ENCODE measurements at regions of chr20 and their contacts with region 1.

Region 1: DNA sequence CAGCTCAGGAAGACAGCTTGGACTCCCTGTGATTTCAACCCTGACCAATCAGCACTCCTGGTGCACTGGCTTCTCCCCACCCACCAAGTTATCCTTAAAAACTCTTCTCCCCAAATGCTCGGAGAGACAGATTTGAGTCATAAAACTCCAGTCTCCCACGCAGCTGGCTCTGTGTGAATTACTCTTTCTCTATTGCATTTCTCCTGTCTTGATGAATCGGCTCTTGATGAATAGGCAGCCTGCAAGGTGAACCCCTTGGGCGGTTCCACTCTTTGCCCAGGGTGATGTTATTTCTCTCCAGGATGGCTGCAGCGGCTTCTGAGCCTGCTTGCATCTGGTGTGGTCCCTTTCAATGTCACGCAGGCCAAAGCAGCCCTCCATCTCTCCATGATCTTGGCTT is 12.4 kb downstream of the SLC52A3 start:
- DNase-seq: no peak
- H3K4me3 ChIP-seq: no peak overlapping the region
- H3K27ac ChIP-seq: no peak overlapping the region
- H3K4me1 ChIP-seq: no peaks in the 10 kb centered on the region
- H3K27me3 ChIP-seq: peaks cover 0 to 7% of the 10 kb centered on the region in 2 donors
- CTCF ChIP-seq: no peak
- POLR2A ChIP-seq: no peak

Region 2: GRCh38 chr20:588932-589672 is 166.8 kb before region 1 on chr20:
- intact Hi-C with region 1: no loop called
- DNase-seq: no peak
- H3K4me3 ChIP-seq: no peak overlapping the region
- H3K27ac ChIP-seq: no peak overlapping the region
- H3K4me1 ChIP-seq: no peaks in the 10 kb centered on the region
- H3K27me3 ChIP-seq: peaks cover 0 to 4% of the 10 kb centered on the region in 2 donors
- CTCF ChIP-seq: no peak
- POLR2A ChIP-seq: no peak

Region 3: DNA sequence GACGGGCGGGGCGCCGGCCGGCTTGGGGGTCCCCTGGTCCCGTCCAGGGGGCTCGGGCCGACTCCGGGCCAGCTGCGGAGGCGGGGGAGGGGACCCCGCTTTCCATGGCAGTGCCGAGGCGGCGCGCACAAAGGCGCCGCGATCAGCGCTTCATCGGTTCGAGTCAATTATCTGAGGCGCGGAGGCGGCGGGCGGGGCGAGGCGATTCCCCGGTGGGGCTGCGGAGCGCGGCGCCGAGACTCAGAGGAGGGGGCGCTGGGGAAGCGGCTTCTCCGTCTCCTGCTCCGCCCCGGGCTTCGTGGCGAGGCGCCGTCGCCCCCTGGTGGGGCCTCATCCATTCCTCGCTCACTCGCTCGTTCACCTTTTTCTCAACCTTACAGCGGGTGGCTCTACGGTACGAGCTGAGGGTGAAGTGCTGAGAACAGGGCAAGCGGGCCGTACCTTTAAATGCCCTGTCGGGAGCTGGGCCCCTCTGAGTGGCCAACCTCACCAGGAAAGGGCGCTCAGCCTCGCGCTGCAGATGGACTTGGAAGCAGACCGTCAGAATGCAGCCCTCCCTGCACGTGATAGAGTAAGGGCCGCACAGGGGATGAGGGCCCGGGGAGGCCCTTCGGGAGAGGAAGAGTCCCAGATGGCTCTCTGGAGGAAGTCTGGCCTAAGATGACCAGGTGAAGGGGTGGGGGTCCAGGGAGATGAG is 27.5 kb before region 1 on chr20:
- intact Hi-C with region 1: no loop called
- DNase-seq: no peak
- H3K4me3 ChIP-seq: peak overlapping the region; percentile 11 to 65 (median 43)
- H3K27ac ChIP-seq: no peak overlapping the region
- H3K4me1 ChIP-seq: no peaks in the 10 kb centered on the region
- H3K27me3 ChIP-seq: peaks cover 0 to 28% of the 10 kb centered on the region in 2 donors
- CTCF ChIP-seq: peak in 1 of 3 donors; percentile 35
- POLR2A ChIP-seq: no peak

Region 4: DNA sequence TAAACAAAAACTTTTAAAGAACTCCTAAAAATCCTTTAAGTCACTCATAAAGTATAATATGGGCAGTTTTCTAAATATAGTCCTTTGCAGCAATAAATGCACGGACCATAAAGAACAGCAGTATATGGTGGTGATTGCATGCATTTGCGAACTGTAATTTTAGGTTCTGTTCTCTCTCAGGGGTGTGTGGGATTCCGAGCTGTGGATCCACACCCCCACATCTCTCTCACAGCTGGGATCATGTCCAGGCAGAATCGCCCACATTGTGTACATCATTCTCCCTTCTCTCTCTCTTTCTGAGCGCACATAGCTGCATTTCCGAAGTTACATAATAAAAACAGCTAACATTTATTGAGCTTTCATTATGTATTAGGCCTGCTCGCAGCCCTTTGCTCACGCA is 16.2 kb before region 1 on chr20:
- intact Hi-C with region 1: loop called (anchors 2 kb)
- DNase-seq: no peak
- H3K4me3 ChIP-seq: no peak overlapping the region
- H3K27ac ChIP-seq: no peak overlapping the region
- H3K4me1 ChIP-seq: no peaks in the 10 kb centered on the region
- H3K27me3 ChIP-seq: no peaks in the 10 kb centered on the region
- CTCF ChIP-seq: no peak
- POLR2A ChIP-seq: no peak

Region 5: GRCh38 chr20:856361-857040 is 100.6 kb after region 1 on chr20:
- intact Hi-C with region 1: no loop called
- DNase-seq: peak; percentile 87 to 92
- H3K4me3 ChIP-seq: peak overlapping the region in 1 of 3 donors; percentile 28
- H3K27ac ChIP-seq: peak overlapping the region; percentile 55 to 62
- H3K4me1 ChIP-seq: no peaks in the 10 kb centered on the region
- H3K27me3 ChIP-seq: no peaks in the 10 kb centered on the region
- CTCF ChIP-seq: no peak
- POLR2A ChIP-seq: no peak